Activated CD4-positive, alpha-beta T cell treated with anti-CD3 and anti-CD28 coated beads for 36 hours (primary cell): ENCODE measurements at regions of chr14 and their contacts with region 1.

Region 1: GRCh38 chr14:24299255-24300195 is at the starts of genes DHRS1 and NOP9:
- DNase-seq: peak; percentile 96
- ATAC-seq: peak; percentile 67
- H3K4me3 Mint-ChIP-seq: peak within 1 kb of the TSS; percentile 91
- H3K27ac Mint-ChIP-seq: peak within 1 kb of the TSS; percentile 77
- H3K4me1 Mint-ChIP-seq: peaks cover 51% of the 10 kb centered on the region
- H3K27me3 Mint-ChIP-seq: no peaks in the 10 kb centered on the region
- total RNA-seq, gene DHRS1: 11.7 to 14.6 TPM
- total RNA-seq, gene NOP9: 24.4 to 32.5 TPM

Region 2: GRCh38 chr14:24013654-24014514 is 285.6 kb before region 1 on chr14:
- CTCF ChIA-PET with region 1: no interaction called
- POLR2A ChIA-PET with region 1: no interaction called
- intact Hi-C with region 1: loop called (anchors 1 to 5 kb)
- DNase-seq: peak; percentile 63
- ATAC-seq: peak; percentile 98
- H3K4me3 Mint-ChIP-seq: no peak overlapping the region
- H3K27ac Mint-ChIP-seq: no peak overlapping the region
- H3K4me1 Mint-ChIP-seq: peaks cover 23% of the 10 kb centered on the region
- H3K27me3 Mint-ChIP-seq: no peaks in the 10 kb centered on the region

Region 3: DNA sequence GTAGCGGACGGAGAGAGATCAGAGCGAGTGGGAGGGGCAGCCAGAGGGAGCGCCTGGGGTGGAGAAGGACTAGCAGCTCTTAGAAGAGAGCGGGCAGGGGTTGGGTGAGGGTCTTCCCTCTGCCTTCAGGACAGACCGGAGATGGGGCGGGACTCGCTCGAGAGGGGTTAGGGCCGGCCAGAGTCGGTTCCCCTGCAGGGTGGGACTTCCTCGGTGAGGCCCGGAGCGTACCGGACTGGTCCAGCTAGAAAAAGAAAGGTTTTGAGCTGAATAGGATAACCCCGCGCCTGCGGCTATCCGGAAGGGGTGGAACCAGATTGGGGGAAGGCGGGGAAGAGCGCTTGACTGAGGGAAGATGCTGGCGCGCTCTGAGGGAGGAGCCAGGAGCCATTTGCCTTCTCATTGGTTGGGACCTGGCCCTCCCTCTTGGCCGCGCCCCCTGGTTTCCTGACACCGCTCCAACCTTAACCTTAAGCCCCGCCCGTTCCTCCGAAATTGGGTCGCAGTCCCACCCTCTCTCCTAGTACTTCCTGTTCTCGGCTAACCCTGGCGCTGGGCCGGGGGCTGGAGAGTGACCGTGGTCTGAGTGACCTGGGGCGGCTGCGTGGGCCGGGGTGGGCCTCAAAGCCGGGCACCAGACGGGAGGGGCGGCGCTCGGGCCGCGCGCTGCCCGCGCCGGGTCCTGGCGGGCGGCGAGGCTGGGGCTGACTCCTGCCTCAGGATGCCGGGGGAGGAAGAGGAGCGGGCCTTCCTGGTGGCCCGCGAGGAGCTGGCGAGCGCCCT is 152.4 kb before region 1 on chr14 and contains the start of gene RNF31:
- CTCF ChIA-PET with region 1: interaction called, 4 read pairs
- POLR2A ChIA-PET with region 1: interaction called, 3 read pairs
- intact Hi-C with region 1: loop called (anchors 1 to 5 kb)
- DNase-seq: peak; percentile 99
- ATAC-seq: peak; percentile 89
- H3K4me3 Mint-ChIP-seq: peak within 1 kb of the TSS; percentile 94
- H3K27ac Mint-ChIP-seq: peak within 1 kb of the TSS; percentile 97
- H3K4me1 Mint-ChIP-seq: peaks cover 57% of the 10 kb centered on the region
- H3K27me3 Mint-ChIP-seq: no peaks in the 10 kb centered on the region
- total RNA-seq, gene RNF31: 73.7 to 98.4 TPM

Region 4: GRCh38 chr14:24215495-24216344 is 83.8 kb before region 1 on chr14 and contains the start of gene MDP1:
- CTCF ChIA-PET with region 1: interaction called, 35 read pairs
- POLR2A ChIA-PET with region 1: interaction called, 3 read pairs
- intact Hi-C with region 1: loop called (anchors 1 kb)
- DNase-seq: peak; percentile 93
- ATAC-seq: peak; percentile 76
- H3K4me3 Mint-ChIP-seq: peak within 1 kb of the TSS; percentile 92
- H3K27ac Mint-ChIP-seq: peak within 1 kb of the TSS; percentile 95
- H3K4me1 Mint-ChIP-seq: peaks cover 44% of the 10 kb centered on the region
- H3K27me3 Mint-ChIP-seq: no peaks in the 10 kb centered on the region
- total RNA-seq, gene MDP1: 4.5 to 11.7 TPM

Region 5: GRCh38 chr14:24279301-24280186 is 20.0 kb before region 1 on chr14:
- CTCF ChIA-PET with region 1: interaction called, 31 read pairs
- POLR2A ChIA-PET with region 1: no interaction called
- intact Hi-C with region 1: loop called (anchors 1 kb)
- DNase-seq: peak; percentile 80
- ATAC-seq: peak; percentile 90
- H3K4me3 Mint-ChIP-seq: peak overlapping the region; percentile 34
- H3K27ac Mint-ChIP-seq: peak overlapping the region; percentile 89
- H3K4me1 Mint-ChIP-seq: peaks cover 52% of the 10 kb centered on the region
- H3K27me3 Mint-ChIP-seq: no peaks in the 10 kb centered on the region

Region 6: GRCh38 chr14:24442273-24443052 is 142.9 kb after region 1 on chr14 and contains the start of gene SDR39U1:
- CTCF ChIA-PET with region 1: interaction called, 11 read pairs
- POLR2A ChIA-PET with region 1: no interaction called
- intact Hi-C with region 1: loop called in 1 of 2 experiments (anchors 1 kb)
- DNase-seq: peak; percentile 98
- ATAC-seq: peak; percentile 92
- H3K4me3 Mint-ChIP-seq: peak within 1 kb of the TSS; percentile 97
- H3K27ac Mint-ChIP-seq: peak within 1 kb of the TSS; percentile 99
- H3K4me1 Mint-ChIP-seq: peaks cover 41% of the 10 kb centered on the region
- H3K27me3 Mint-ChIP-seq: no peaks in the 10 kb centered on the region
- total RNA-seq, gene SDR39U1: 40.9 to 47.8 TPM

Region 7: DNA sequence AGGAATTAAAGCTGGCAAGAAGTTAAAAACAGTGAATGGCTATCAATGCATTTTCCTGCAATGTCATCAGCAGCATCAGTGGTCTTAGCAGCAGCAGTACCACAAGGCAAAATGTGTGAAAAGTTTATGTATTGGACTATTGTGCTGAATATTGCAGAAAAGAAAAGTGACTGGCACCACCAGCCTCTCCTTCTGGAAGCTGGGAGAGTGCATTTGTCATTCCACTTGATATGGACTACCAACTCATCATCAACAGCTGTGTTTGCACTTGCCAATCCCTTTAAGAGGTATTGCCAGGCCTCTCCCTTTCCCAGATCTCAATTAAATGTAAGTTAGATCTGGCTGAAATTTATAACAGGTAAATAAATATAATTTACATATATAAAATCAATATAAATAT is 485.5 kb after region 1 on chr14:
- CTCF ChIA-PET with region 1: no interaction called
- POLR2A ChIA-PET with region 1: no interaction called
- intact Hi-C with region 1: no loop called
- DNase-seq: no peak
- ATAC-seq: no peak
- H3K4me3 Mint-ChIP-seq: no peak overlapping the region
- H3K27ac Mint-ChIP-seq: no peak overlapping the region
- H3K4me1 Mint-ChIP-seq: no peaks in the 10 kb centered on the region
- H3K27me3 Mint-ChIP-seq: peaks cover 6% of the 10 kb centered on the region